ENCODE measurements at regions of chr17 and their contacts with region 1.

Region 1: GRCh38 chr17:55527540-55528118 is 16.4 kb upstream of the SMIM36 start:
- DNase-seq: peak in 1 of 9 donors; percentile 8
- ATAC-seq: no peak
- H3K4me3 ChIP-seq: no peak overlapping the region
- H3K4me3 Mint-ChIP-seq: no peak overlapping the region
- H3K27ac ChIP-seq: no peak overlapping the region
- H3K27ac Mint-ChIP-seq: no peak overlapping the region
- H3K4me1 ChIP-seq: no peaks in the 10 kb centered on the region
- H3K4me1 Mint-ChIP-seq: peaks cover 0 to 6% (median 0%) of the 10 kb centered on the region in 7 donors
- H3K27me3 ChIP-seq: no peaks in the 10 kb centered on the region
- H3K27me3 Mint-ChIP-seq: peaks cover 0 to 11% (median 0%) of the 10 kb centered on the region in 5 donors

Region 2: GRCh38 chr17:55496094-55496881 is 31.3 kb before region 1 on chr17:
- CTCF ChIA-PET with region 1: no interaction called
- POLR2A ChIA-PET with region 1: no interaction called
- intact Hi-C with region 1: no loop called
- DNase-seq: no peak
- ATAC-seq: peak; percentile 78
- H3K4me3 ChIP-seq: no peak overlapping the region
- H3K4me3 Mint-ChIP-seq: no peak overlapping the region
- H3K27ac ChIP-seq: no peak overlapping the region
- H3K27ac Mint-ChIP-seq: no peak overlapping the region
- H3K4me1 ChIP-seq: no peaks in the 10 kb centered on the region
- H3K4me1 Mint-ChIP-seq: no peaks in the 10 kb centered on the region
- H3K27me3 ChIP-seq: no peaks in the 10 kb centered on the region
- H3K27me3 Mint-ChIP-seq: peaks cover 7 to 38% (median 21%) of the 10 kb centered on the region in 5 donors

Region 3: DNA sequence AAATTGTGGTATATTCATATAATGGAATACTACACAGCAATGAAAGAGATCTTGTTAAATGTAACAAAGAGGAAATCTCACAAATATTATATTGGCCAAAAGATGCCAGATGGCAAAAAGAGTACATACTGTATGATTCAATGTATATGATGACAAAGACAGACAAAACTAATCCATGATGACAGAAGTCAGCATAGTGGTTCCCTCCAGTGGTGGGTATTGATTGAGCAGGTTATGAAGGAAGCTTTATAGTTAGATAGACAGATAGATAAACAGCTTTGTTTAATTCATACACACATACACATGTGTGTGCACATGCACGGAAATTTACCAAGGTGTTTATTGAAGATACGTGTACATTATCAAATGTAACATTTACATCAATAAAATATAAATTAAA is 58.0 kb after region 1 on chr17:
- CTCF ChIA-PET with region 1: interaction called, 7 read pairs
- POLR2A ChIA-PET with region 1: no interaction called
- intact Hi-C with region 1: loop called in 1 of 2 experiments (anchors 1 kb)
- DNase-seq: no peak
- ATAC-seq: no peak
- H3K4me3 ChIP-seq: no peak overlapping the region
- H3K4me3 Mint-ChIP-seq: no peak overlapping the region
- H3K27ac ChIP-seq: no peak overlapping the region
- H3K27ac Mint-ChIP-seq: no peak overlapping the region
- H3K4me1 ChIP-seq: no peaks in the 10 kb centered on the region
- H3K4me1 Mint-ChIP-seq: peaks cover 0 to 9% (median 2%) of the 10 kb centered on the region in 7 donors
- H3K27me3 ChIP-seq: no peaks in the 10 kb centered on the region
- H3K27me3 Mint-ChIP-seq: peaks cover 0 to 13% (median 0%) of the 10 kb centered on the region in 5 donors

Region 4: GRCh38 chr17:55601874-55602364 is 74.3 kb after region 1 on chr17:
- CTCF ChIA-PET with region 1: interaction called, 100 read pairs
- POLR2A ChIA-PET with region 1: no interaction called
- intact Hi-C with region 1: loop called (anchors 1 kb)
- DNase-seq: peak in 6 of 9 donors; percentile 13 to 44 (median 28)
- ATAC-seq: peak; percentile 50
- H3K4me3 ChIP-seq: no peak overlapping the region
- H3K4me3 Mint-ChIP-seq: no peak overlapping the region
- H3K27ac ChIP-seq: no peak overlapping the region
- H3K27ac Mint-ChIP-seq: no peak overlapping the region
- H3K4me1 ChIP-seq: no peaks in the 10 kb centered on the region
- H3K4me1 Mint-ChIP-seq: no peaks in the 10 kb centered on the region
- H3K27me3 ChIP-seq: no peaks in the 10 kb centered on the region
- H3K27me3 Mint-ChIP-seq: peaks cover 11 to 28% (median 19%) of the 10 kb centered on the region in 5 donors

Region 5: DNA sequence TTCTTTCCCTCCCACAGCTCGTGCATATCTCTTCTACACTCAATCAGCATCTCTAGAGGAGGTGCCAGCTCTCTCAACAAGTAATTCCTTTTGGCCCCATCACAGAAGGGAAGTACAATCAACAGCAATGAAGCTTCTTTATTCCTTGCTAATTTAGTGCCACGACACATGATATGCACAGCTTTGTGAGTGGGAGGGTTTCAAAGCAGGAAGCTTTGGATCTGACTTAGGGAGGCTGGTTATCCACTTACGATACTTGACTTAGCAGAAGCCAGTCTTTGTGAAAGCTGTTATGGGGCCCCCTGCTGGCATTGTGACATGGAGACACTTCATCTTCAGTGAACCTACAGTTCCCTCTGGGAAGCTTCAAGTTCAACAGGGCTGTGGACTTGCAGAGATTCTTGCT is 114.0 kb after region 1 on chr17:
- CTCF ChIA-PET with region 1: interaction called, 4 read pairs
- POLR2A ChIA-PET with region 1: no interaction called
- intact Hi-C with region 1: loop called (anchors 1 kb)
- DNase-seq: peak in 3 of 9 donors; percentile 2 to 18 (median 7)
- ATAC-seq: no peak
- H3K4me3 ChIP-seq: no peak overlapping the region
- H3K4me3 Mint-ChIP-seq: no peak overlapping the region
- H3K27ac ChIP-seq: no peak overlapping the region
- H3K27ac Mint-ChIP-seq: no peak overlapping the region
- H3K4me1 ChIP-seq: peaks cover 0 to 7% of the 10 kb centered on the region in 2 donors
- H3K4me1 Mint-ChIP-seq: peaks cover 0 to 8% (median 4%) of the 10 kb centered on the region in 7 donors
- H3K27me3 ChIP-seq: no peaks in the 10 kb centered on the region
- H3K27me3 Mint-ChIP-seq: peaks cover 8 to 20% (median 13%) of the 10 kb centered on the region in 5 donors

Region 6: GRCh38 chr17:55717898-55718735 is 190.5 kb after region 1 on chr17:
- CTCF ChIA-PET with region 1: interaction called, 23 read pairs
- POLR2A ChIA-PET with region 1: no interaction called
- intact Hi-C with region 1: loop called (anchors 1 kb)
- DNase-seq: peak; percentile 20 to 58 (median 38)
- ATAC-seq: peak; percentile 49
- H3K4me3 ChIP-seq: no peak overlapping the region
- H3K4me3 Mint-ChIP-seq: no peak overlapping the region
- H3K27ac ChIP-seq: no peak overlapping the region
- H3K27ac Mint-ChIP-seq: no peak overlapping the region
- H3K4me1 ChIP-seq: no peaks in the 10 kb centered on the region
- H3K4me1 Mint-ChIP-seq: no peaks in the 10 kb centered on the region
- H3K27me3 ChIP-seq: no peaks in the 10 kb centered on the region
- H3K27me3 Mint-ChIP-seq: peaks cover 14 to 29% (median 27%) of the 10 kb centered on the region in 5 donors

Region 7: GRCh38 chr17:55735731-55736405 is 208.2 kb after region 1 on chr17:
- CTCF ChIA-PET with region 1: interaction called, 3 read pairs
- POLR2A ChIA-PET with region 1: no interaction called
- intact Hi-C with region 1: loop called in 1 of 2 experiments (anchors 1 kb)
- DNase-seq: peak in 6 of 9 donors; percentile 7 to 38 (median 30)
- ATAC-seq: peak; percentile 61
- H3K4me3 ChIP-seq: no peak overlapping the region
- H3K4me3 Mint-ChIP-seq: no peak overlapping the region
- H3K27ac ChIP-seq: no peak overlapping the region
- H3K27ac Mint-ChIP-seq: no peak overlapping the region
- H3K4me1 ChIP-seq: no peaks in the 10 kb centered on the region
- H3K4me1 Mint-ChIP-seq: peaks cover 0 to 6% (median 0%) of the 10 kb centered on the region in 7 donors
- H3K27me3 ChIP-seq: no peaks in the 10 kb centered on the region
- H3K27me3 Mint-ChIP-seq: peaks cover 0 to 27% (median 10%) of the 10 kb centered on the region in 5 donors

Region 8: DNA sequence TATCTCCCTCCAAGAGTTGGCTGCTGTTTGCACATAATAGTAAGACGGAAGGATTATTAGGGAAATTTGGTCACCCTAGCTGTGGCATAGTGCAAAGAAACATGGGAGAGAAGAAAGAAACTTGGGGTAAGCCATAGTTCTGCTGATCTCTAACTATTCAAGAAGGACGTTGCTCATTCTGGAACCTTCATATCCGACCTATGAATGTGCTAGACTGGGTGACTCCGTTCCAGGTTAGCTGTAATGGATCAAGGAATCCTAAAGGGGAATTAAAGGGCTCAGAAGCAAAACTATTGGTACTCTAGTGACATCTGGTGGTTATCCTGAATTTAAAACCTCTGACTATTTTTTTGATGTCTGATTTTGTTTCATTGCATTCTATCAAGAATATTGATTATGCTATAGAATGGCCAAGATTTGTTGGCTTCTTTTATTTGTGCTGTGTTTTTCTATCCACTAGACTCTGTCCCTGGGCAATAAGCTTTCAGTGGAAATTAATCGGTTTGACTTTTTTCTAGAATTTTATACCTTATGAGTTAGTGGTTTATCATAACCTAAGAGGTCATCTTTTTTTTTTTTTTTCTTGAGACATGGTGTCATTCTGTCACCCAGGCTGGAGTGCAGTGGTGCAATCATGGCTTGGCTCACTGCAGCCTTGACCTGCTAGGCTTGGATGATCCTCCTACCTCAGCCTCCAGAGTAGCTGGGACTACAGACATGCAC is 242.7 kb after region 1 on chr17:
- CTCF ChIA-PET with region 1: interaction called, 7 read pairs
- POLR2A ChIA-PET with region 1: no interaction called
- intact Hi-C with region 1: loop called (anchors 1 kb)
- DNase-seq: peak in 2 of 9 donors; percentile 5 to 7
- ATAC-seq: no peak
- H3K4me3 ChIP-seq: no peak overlapping the region
- H3K4me3 Mint-ChIP-seq: no peak overlapping the region
- H3K27ac ChIP-seq: no peak overlapping the region
- H3K27ac Mint-ChIP-seq: no peak overlapping the region
- H3K4me1 ChIP-seq: no peaks in the 10 kb centered on the region
- H3K4me1 Mint-ChIP-seq: no peaks in the 10 kb centered on the region
- H3K27me3 ChIP-seq: no peaks in the 10 kb centered on the region
- H3K27me3 Mint-ChIP-seq: no peaks in the 10 kb centered on the region